GM18951 (cell line): ENCODE measurements at regions of chr21 and their contacts with region 1.

Region 1: DNA sequence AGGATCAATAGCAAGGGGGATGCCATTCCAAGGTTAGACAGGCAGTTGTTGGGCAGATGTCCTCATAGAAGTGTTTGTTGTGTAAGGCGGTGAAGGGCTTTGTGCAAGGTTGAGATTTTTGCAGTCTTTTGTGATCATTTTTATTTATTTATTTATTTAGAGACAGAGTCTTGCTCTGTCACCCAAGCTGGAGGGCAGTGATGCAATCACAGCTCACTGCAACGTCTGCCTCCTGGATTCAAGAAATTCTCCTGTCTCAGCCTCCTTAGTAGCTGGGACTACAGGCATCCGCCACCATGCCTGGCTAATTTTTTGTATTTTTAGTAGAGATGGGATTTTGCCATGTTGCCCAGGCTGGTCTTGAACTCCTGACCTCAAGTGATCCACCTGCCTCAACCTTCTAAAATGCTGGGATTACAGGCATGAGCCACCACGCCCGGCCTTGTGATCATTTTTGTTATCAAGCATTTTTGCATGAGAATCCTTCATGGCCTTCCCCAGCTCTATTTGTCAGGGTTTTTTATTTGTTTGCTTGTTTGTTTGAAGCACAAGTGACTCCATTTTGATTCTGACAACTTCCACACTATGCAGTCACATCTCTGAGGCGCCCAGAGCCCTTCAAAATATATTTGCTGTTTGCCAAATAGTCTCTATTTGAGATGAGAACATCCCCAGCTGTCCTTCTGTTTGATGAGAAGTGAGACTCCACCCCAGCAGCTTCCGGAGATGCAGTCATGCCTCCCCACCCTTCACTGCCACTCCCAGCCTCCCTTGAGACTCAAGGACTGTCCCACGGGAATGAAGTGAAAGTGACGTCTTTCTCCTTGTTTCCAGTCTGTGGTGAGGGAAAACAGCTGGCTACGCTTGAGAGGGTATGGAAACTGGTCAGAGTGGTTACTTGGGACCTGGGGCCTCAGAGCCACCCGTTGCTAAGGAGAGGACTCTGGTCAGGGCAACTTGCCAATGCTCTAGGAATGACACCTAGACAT is 38.0 kb downstream of the TMEM50B start:
- POLR2A ChIP-seq: peak; percentile 21

Region 2: GRCh38 chr21:33199516-33200217 is 242.1 kb before region 1 on chr21:
- in situ Hi-C with region 1: loop called (anchors 5 kb)
- POLR2A ChIP-seq: no peak

Region 3: GRCh38 chr21:34302521-34302920 is 860.7 kb after region 1 on chr21:
- in situ Hi-C with region 1: no loop called
- POLR2A ChIP-seq: no peak